IMR-90 (cell line): ENCODE measurements at regions of chr1 and their contacts with region 1.

Region 1: DNA sequence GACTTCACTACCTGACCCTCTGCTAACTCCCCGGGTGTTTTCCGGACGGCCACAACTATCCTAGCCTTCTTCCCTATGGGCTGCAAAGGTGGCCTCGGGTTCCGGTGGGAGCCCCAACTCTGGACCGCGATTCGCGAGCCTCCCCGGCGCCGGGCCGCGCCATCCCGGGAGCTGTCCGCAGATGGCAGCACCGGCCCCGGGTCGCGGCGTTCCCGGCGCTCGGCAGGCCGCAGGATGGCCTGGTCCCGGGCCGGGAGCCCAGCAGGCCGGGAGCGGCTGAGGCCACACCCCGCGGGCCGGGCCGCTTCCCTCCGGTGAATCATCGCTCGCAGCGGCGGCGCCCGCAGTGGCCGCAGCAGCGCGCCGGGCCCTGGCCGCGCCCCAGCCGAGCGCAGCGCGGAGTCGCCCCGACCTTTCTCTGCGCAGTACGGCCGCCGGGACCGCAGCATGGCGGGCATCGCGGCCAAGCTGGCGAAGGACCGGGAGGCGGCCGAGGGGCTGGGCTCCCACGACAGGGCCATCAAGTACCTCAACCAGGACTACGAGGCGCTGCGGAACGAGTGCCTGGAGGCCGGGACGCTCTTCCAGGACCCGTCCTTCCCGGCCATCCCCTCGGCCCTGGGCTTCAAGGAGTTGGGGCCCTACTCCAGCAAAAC is at the start of gene CAPN2:
- DNase-seq: peak; percentile 86
- ATAC-seq: peak; percentile 77
- H3K4me3 ChIP-seq: peak within 1 kb of the TSS; percentile 99
- H3K27ac ChIP-seq: peak within 1 kb of the TSS; percentile 99
- H3K4me1 ChIP-seq: peaks cover 33% of the 10 kb centered on the region
- H3K27me3 ChIP-seq: no peaks in the 10 kb centered on the region
- CTCF ChIP-seq: peak; percentile 83
- POLR2A ChIP-seq: peak; percentile 88
- RAD21 ChIP-seq: peak; percentile 78
- total RNA-seq, gene CAPN2: 430 and 460 TPM in 2 replicates

Region 2: GRCh38 chr1:222712253-222713090 is 999.9 kb before region 1 on chr1 and contains the starts of genes AIDA and BROX:
- CTCF ChIA-PET with region 1: no interaction called
- POLR2A ChIA-PET with region 1: interaction called, 27 read pairs
- dilution Hi-C with region 1: no loop called
- in situ Hi-C with region 1: no loop called
- intact Hi-C with region 1: no loop called
- DNase-seq: peak; percentile 76
- ATAC-seq: peak; percentile 88
- H3K4me3 ChIP-seq: peak within 1 kb of the TSS; percentile 92
- H3K27ac ChIP-seq: peak within 1 kb of the TSS; percentile 100
- H3K4me1 ChIP-seq: no peaks in the 10 kb centered on the region
- H3K27me3 ChIP-seq: no peaks in the 10 kb centered on the region
- CTCF ChIP-seq: no peak
- POLR2A ChIP-seq: peak; percentile 52; the same call in 1 of the 2 replicates
- RAD21 ChIP-seq: no peak
- total RNA-seq, gene AIDA: 47.9 and 71.4 TPM in 2 replicates
- total RNA-seq, gene BROX: 43.4 and 63.9 TPM in 2 replicates

Region 3: DNA sequence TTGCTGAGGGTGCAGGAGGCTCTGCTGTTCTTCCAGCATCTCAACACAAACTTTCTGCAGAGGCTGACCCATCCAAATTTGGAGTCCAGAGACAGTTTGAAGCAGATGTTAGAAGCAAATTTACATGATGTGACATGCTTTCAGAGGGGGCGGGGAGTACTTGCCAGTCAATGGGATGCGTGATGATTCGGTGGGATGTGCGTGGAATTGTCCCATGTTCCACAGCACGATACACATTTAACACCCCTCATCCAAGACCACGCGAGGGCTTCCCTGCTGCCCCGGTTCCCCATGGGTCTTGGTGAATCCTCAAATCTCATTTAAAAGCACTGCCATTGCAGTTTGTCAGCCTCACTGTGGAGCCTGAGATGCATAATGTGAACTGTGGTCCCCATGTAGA is 490.6 kb before region 1 on chr1:
- CTCF ChIA-PET with region 1: no interaction called
- POLR2A ChIA-PET with region 1: interaction called, 16 read pairs
- dilution Hi-C with region 1: no loop called
- in situ Hi-C with region 1: no loop called
- intact Hi-C with region 1: no loop called
- DNase-seq: no peak
- ATAC-seq: no peak
- H3K4me3 ChIP-seq: no peak overlapping the region
- H3K27ac ChIP-seq: no peak overlapping the region
- H3K4me1 ChIP-seq: no peaks in the 10 kb centered on the region
- H3K27me3 ChIP-seq: peaks cover 4% of the 10 kb centered on the region
- CTCF ChIP-seq: no peak
- POLR2A ChIP-seq: no peak
- RAD21 ChIP-seq: no peak

Region 4: GRCh38 chr1:223726380-223727001 is 14.2 kb after region 1 on chr1:
- CTCF ChIA-PET with region 1: interaction called, 3 read pairs
- POLR2A ChIA-PET with region 1: interaction called, 29 read pairs
- dilution Hi-C with region 1: no loop called
- in situ Hi-C with region 1: no loop called
- intact Hi-C with region 1: loop called (anchors 1 kb)
- DNase-seq: peak; percentile 98
- ATAC-seq: peak; percentile 58
- H3K4me3 ChIP-seq: no peak overlapping the region
- H3K27ac ChIP-seq: peak overlapping the region; percentile 87
- H3K4me1 ChIP-seq: peaks cover 46% of the 10 kb centered on the region
- H3K27me3 ChIP-seq: no peaks in the 10 kb centered on the region
- CTCF ChIP-seq: no peak
- POLR2A ChIP-seq: no peak
- RAD21 ChIP-seq: no peak